ENCODE measurements at regions of chr6 and their contacts with region 1.

Region 1: DNA sequence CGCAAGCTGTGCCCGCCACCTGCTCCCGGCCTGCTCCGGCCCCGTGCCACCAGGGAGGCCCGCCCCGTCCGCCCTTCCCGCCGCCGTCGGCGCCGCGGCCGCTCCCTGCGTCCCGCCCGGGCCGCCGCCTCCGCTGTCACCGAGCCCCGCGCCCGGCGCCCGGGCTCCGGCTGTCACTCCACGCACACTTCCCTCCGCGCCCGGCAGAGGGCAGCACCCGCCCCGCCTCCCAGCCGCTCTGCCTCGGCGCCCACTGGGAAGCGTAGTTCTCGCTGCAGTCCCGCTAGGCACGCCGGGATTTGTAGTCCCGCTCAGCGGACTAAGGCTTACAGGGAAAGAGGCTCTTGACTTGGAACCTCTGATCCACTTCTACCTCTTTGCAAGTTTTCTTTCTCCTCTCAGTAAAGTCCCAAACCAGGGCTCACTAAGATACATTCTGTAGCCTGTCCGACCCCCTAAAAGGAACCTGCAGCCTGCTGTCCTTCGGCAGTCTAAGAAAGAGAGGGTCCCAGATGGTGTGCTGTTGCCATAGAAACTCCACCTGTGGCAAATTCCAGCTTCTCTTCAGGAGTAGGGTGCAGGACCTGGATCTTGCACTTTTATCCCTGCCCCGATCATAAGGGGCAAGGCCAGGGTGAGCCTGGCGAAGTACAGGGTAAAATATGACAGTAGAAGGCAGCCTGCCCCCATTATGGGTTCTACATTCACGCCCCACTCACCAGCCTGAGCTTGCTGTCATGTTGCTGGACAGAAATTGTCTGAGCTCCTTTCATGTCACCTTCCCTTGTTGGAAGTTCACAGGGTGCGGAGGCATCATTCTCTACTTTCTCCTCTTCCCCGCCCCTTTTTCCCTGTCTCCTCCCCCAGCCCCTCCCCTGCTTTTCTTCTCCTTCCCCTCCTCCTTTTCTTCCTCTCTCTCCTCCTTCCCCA is at the start of gene TFEB:
- DNase-seq: peak; percentile 93
- H3K4me3 ChIP-seq: peak within 1 kb of the TSS; percentile 91
- H3K27ac ChIP-seq: peak within 1 kb of the TSS; percentile 94
- H3K4me1 ChIP-seq: peaks cover 41% of the 10 kb centered on the region
- CTCF ChIP-seq: peak; percentile 76
- total RNA-seq, gene TFEB: 25.3 and 36.8 TPM in 2 replicates

Region 2: GRCh38 chr6:41545703-41546474 is 189.8 kb before region 1 on chr6 and contains the start of gene FOXP4:
- CTCF ChIA-PET with region 1: no interaction called
- POLR2A ChIA-PET with region 1: no interaction called
- intact Hi-C with region 1: loop called (anchors 2 kb)
- DNase-seq: peak; percentile 94
- H3K4me3 ChIP-seq: peak within 1 kb of the TSS; percentile 94
- H3K27ac ChIP-seq: peak within 1 kb of the TSS; percentile 61
- H3K4me1 ChIP-seq: peaks cover 28% of the 10 kb centered on the region
- CTCF ChIP-seq: no peak
- total RNA-seq, gene FOXP4: 5.1 and 6.3 TPM in 2 replicates

Region 3: GRCh38 chr6:41683510-41684310 is 52.0 kb before region 1 on chr6:
- CTCF ChIA-PET with region 1: no interaction called
- POLR2A ChIA-PET with region 1: no interaction called
- intact Hi-C with region 1: loop called (anchors 2 kb)
- DNase-seq: peak; percentile 81
- H3K4me3 ChIP-seq: no peak overlapping the region
- H3K27ac ChIP-seq: no peak overlapping the region
- H3K4me1 ChIP-seq: peaks cover 16% of the 10 kb centered on the region
- CTCF ChIP-seq: peak; percentile 85

Region 4: DNA sequence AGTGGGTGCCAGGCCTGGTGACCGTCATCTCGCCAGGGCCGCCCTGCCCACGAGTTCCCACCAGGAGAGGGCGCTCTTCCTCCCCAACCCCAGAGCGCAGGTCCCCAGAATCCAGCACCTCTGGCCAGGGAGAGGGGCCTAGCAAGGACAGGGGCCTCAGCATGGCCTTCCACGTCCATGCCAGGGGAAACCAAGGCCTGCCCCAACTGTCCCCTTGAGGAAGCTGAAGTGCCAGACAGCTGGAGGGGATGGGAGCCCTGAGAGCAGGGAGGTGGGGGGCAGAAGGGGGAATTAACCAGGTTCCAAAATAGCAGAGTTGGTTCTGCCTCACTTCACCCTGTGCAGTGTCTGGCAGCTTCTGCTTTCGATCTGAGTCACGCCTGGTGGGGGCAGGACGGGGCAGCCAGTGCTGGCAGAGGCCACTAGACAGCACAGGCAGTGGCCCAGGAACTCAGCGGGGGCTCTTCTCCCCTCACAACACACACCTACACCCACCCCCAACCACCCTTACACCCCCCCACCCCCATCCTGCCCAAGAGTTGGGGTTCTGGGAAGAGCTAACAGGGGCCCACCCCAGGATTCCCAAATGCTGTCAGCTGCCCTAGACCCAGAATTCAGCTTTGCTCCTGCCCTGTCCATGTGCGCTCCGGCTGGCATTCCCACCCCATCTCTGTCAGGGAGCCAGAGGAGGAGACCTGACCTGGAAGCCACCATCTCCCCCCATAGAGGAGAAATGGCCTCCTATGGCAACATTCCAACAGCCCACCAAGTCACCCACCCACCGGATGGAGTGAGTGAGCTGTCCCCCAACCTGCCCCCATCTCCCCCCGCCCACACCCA is 29.5 kb before region 1 on chr6:
- CTCF ChIA-PET with region 1: interaction called, 41 read pairs
- POLR2A ChIA-PET with region 1: interaction called, 118 read pairs
- intact Hi-C with region 1: loop called (anchors 1 kb)
- DNase-seq: peak; percentile 94
- H3K4me3 ChIP-seq: peak overlapping the region; percentile 69
- H3K27ac ChIP-seq: peak overlapping the region; percentile 90
- H3K4me1 ChIP-seq: peaks cover 74% of the 10 kb centered on the region
- CTCF ChIP-seq: peak; percentile 96

Region 5: DNA sequence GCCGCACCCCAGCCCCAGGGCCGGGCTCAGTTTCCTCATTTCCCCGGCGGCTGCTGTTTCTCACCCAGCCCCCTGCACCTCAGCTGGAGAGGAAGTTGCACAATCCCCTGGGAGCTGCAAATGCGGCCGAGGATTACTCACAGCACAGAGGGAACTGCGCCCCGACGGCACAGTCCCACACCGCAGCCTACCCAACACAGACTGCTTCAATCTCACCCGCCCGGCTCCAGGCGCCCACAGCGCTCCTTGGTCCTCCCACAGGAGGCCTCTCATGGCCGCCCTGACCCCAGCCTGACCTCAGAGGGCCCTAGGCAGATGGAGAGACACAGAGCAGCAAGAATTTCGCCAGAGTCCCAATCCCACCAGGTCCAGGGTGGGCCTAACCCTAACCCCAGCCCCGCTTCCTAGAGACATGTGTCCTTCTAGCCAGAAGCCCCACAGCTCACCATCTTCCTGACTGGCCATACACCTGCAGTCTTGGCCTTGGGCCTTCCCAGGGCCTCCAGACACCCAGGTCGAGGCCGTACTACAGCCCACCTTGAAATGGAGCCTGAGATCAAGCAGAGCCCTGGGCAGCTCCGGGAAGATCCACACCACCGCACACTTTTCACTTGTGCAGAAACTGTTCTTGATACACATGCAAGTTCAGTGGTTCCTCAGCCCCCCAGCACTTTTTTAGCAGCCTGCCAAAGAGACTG is 12.0 kb before region 1 on chr6:
- CTCF ChIA-PET with region 1: interaction called, 6 read pairs
- POLR2A ChIA-PET with region 1: interaction called, 31 read pairs
- intact Hi-C with region 1: loop called (anchors 1 kb)
- DNase-seq: peak; percentile 94
- H3K4me3 ChIP-seq: peak overlapping the region; percentile 67
- H3K27ac ChIP-seq: peak overlapping the region; percentile 93
- H3K4me1 ChIP-seq: peaks cover 98% of the 10 kb centered on the region
- CTCF ChIP-seq: 0 out of 2 replicates have a peak, but pooled peaks have one; percentile 21

Region 6: DNA sequence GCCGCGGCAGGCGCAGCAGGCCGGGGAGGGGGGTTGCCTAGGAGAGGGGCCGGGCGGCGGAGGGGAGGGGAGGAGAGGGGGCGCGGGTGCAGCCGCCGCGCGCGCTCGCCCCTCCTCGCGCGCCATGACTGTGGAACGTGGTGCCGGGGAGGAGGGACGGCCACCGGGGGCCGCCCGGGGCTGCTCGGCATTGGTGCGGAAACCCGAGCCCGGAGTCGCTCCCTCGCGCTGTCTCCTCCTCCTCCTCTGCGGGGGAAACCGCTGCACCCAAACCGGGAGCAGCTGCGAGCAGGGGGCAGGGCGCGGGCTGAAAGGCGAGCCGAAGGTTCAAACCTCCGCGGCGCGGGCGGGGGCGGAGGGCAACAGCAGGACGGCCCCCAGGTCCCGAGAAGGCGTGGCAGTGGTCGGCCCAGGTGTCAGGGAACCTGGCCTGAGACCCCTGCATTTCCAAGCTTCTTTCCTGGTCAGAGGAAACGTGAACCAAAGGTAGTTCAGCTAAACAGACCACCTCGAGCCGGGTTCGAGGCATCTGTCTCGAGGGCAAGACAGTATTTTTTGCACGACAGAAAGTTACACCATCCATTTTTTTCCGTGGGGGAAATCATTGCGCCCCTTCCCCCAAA is 717.5 kb after region 1 on chr6:
- CTCF ChIA-PET with region 1: no interaction called
- POLR2A ChIA-PET with region 1: no interaction called
- intact Hi-C with region 1: loop called (anchors 5 kb)
- DNase-seq: peak; percentile 88
- H3K4me3 ChIP-seq: peak overlapping the region; percentile 80
- H3K27ac ChIP-seq: peak overlapping the region; percentile 77
- H3K4me1 ChIP-seq: peaks cover 26% of the 10 kb centered on the region
- CTCF ChIP-seq: no peak